ENCODE measurements at regions of chr11 and their contacts with region 1.

Region 1: DNA sequence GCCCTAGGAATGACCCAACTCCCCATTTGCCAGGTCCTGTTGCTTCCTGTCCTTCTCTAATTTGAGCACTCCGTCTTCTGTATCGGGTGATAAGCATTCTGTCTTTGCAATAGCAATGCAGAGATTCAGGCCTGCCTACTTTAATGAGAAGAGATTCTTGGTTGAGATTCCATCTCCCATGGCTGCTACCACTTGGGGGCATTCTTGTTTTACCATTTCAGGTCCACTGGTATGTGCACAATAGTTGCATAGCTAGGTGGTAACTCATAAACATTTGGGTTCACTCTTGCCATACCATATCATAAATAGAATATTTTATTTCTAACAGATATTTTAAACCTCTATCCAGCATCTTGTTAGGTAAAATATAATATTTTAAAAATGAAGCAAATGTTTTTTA is 34.4 kb upstream of the CALCB start:
- DNase-seq: no peak
- H3K4me3 ChIP-seq: no peak overlapping the region
- CTCF ChIP-seq: no peak

Region 2: DNA sequence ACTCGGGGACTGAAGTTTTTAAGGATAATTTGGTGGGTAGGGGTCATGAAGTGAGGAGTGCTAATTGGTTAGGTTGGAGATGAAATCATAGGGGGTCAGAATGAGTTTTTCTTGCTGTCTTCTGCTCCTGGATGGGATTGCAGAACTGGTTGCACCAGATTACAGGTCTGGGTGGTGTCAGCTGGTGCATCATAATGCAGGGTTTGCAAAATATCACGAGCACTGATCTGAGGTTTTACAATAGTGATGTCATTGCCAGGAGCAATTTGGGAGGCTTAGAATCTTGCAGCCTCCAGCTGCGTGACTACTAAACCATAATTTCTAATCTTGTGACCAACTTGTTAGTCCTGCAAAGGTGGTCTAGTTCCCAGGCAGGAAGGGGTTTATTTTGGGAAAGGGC is 12.0 kb before region 1 on chr11:
- CTCF ChIA-PET with region 1: no interaction called
- POLR2A ChIA-PET with region 1: no interaction called
- DNase-seq: no peak
- H3K4me3 ChIP-seq: no peak overlapping the region
- CTCF ChIP-seq: no peak

Region 3: DNA sequence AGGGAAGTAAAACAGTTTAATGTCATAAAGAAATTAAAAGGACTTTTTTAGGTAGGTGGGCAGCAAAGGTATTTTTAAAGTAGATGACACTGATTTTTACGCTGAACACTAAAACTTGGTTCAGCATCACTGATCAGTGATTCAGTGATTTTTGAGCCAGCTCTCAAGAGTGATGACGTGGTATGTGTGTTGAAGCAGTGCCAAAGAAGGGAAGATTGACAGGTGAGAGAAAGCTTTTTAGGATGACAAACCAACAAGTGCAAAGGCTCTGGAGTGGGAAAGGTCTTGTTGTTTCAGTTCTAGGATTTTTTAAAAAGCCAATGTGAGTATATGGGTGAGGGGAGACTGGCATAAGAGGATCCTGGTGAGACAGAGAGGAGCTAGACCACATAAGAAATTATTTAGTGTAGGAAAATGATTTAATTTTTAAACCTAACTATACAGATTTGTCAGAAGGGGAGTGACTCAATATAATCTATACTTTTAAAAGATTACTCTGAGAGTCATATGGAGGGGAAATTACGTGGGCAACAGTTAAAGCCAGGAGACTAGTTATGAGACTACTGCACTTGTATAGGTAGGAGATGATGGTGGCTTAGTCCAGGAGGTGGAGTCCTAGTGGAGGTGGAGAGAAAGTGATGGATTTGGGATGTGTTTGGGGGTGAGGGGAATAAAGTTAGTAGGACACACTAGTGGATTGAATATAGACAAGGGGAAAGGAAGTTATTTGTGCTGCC is 16.8 kb after region 1 on chr11:
- CTCF ChIA-PET with region 1: no interaction called
- POLR2A ChIA-PET with region 1: no interaction called
- DNase-seq: no peak
- H3K4me3 ChIP-seq: no peak overlapping the region
- CTCF ChIP-seq: no peak

Region 4: DNA sequence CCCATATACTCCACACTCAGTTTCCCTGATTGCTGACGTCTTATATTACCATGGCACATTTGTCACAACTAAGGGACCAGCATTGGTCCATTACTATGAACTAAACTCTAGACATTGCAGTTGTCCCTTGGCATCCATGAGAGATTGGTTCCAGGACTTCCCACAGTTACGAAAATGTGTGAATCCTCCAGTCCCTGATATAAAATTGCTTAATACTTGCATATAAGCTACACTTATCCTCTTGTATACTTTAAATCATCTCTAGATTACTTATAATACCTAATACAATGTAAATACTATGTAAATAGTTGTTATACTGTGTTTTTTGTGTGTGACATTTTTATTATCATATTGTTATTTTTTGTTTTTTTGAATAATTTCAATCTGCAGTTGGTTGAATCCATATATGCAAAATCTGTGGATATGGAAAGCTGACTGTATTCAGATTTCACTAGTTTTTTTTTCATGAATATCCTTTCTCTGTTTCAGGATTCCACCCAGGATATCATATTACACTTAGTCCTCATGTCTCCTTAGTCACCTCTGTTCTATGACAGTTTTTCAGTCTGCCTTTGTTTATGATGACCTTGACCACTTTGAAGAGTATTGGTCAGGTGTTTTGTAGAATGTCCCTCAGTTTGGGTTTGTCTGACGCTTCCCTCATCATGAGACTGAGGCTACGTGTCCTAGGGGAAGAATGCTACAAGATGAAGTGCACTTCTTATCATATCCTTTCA is 131.0 kb after region 1 on chr11:
- CTCF ChIA-PET with region 1: no interaction called
- POLR2A ChIA-PET with region 1: no interaction called
- DNase-seq: no peak
- H3K4me3 ChIP-seq: no peak overlapping the region
- CTCF ChIP-seq: no peak

Region 5: DNA sequence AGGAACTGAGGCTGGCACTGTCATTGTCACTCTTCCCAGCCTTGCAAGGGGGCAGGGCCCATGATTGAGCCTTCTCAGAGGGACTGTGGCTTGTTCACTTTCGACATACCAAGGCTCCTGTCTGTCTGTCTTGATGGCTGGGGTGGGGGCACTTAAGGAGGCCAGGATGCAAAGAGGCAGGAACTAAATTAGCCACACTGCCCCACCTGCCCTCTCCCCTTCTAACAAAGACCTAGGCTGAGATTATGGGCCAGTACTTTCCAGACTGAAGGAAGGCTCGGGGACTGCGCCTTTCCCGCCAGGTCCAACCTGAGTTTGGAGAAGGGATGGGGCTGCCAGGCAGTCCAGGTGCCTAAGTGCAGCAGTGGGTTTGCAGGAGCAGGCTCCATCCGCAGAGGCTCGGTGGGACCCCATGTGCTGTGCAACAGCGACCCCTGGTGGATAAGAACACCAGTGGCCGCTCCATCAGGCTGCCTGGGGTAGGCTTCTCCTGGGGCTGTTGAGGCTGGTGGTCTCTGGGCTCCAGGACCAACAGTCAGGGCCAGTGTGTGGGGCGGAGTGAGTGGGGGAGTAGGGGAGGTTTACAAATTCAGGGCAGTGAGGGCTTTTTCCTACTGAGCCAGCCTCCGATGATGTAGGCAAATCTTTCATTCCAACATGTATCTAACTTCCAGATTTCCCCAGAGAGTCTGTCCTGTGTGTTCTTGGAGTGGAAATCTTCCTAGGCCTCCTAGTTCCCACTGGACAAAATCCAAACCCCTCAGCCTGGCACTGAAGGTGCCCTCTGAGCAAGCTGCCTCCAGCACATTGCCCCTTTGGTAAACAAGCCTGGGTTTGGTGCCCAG is 169.6 kb after region 1 on chr11:
- CTCF ChIA-PET with region 1: interaction called, 14 read pairs
- POLR2A ChIA-PET with region 1: no interaction called
- DNase-seq: no peak
- H3K4me3 ChIP-seq: no peak overlapping the region
- CTCF ChIP-seq: peak; percentile 95

Measured in AG04449 (cell line).